CD8-positive, alpha-beta T cell (primary cell): ENCODE measurements at regions of chr1 and their contacts with region 1.

Region 1: GRCh38 chr1:42924082-42924850 is 34.4 kb downstream of the SLC2A1 start:
- DNase-seq: peak; percentile 78 to 94 (median 91)
- ATAC-seq: peak; percentile 90
- H3K4me3 ChIP-seq: peak overlapping the region; percentile 90 to 96
- H3K4me3 Mint-ChIP-seq: peak overlapping the region; percentile 95
- H3K27ac ChIP-seq: peak overlapping the region; percentile 83 to 91
- H3K27ac Mint-ChIP-seq: peak overlapping the region; percentile 98
- H3K4me1 ChIP-seq: peaks cover 15% of the 10 kb centered on the region
- H3K4me1 Mint-ChIP-seq: peaks cover 35% of the 10 kb centered on the region
- H3K27me3 ChIP-seq: no peaks in the 10 kb centered on the region
- H3K27me3 Mint-ChIP-seq: no peaks in the 10 kb centered on the region
- CTCF ChIP-seq: no peak

Region 2: DNA sequence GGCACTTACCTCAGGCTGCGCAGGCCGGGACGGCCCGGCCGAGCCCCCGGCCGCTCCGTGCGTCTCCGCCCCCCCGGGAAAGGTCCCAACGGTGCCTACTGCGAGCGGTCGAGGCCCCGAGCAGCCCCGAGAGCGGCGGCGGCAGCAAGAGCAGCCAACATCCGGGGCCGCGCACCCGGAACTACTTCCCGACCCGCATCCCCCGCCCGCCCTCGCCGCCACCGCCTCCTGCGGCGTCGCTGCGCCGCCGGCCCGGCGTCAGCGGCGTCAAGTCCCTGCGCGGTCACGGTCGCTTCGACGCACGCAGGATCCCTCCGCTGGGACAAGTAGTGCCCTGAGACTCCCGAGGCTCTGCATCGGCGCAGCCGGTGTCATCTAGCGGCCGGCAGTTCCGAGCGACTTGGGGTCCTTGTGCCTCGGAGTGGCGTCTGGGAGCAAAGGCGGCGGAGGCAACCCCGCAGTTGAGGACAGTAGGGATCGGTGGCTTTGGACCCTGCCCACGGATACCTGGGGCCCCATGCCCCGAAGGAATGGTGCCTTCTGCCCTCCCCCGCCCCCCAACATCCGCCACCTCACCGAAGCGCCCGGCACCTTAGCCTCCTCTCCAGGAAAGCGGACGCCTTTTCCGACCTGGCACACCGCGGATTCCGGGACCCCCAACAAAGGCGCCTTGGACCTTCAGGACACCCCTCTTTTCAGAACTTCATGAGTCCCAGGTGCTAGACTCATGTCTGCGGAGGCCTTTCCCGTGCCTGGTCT is 589.0 kb before region 1 on chr1 and contains the start of gene FOXJ3:
- CTCF ChIA-PET with region 1: no interaction called
- POLR2A ChIA-PET with region 1: no interaction called
- intact Hi-C with region 1: loop called (anchors 5 to 10 kb)
- DNase-seq: peak; percentile 82 to 99 (median 93)
- ATAC-seq: peak; percentile 92
- H3K4me3 ChIP-seq: peak within 1 kb of the TSS; percentile 82 to 85
- H3K4me3 Mint-ChIP-seq: peak within 1 kb of the TSS; percentile 98
- H3K27ac ChIP-seq: peak within 1 kb of the TSS; percentile 64 to 78
- H3K27ac Mint-ChIP-seq: peak within 1 kb of the TSS; percentile 91
- H3K4me1 ChIP-seq: peaks cover 32% of the 10 kb centered on the region
- H3K4me1 Mint-ChIP-seq: peaks cover 56% of the 10 kb centered on the region
- H3K27me3 ChIP-seq: no peaks in the 10 kb centered on the region
- H3K27me3 Mint-ChIP-seq: no peaks in the 10 kb centered on the region
- CTCF ChIP-seq: no peak
- total RNA-seq, gene FOXJ3: 80.6 to 89.3 TPM

Region 3: DNA sequence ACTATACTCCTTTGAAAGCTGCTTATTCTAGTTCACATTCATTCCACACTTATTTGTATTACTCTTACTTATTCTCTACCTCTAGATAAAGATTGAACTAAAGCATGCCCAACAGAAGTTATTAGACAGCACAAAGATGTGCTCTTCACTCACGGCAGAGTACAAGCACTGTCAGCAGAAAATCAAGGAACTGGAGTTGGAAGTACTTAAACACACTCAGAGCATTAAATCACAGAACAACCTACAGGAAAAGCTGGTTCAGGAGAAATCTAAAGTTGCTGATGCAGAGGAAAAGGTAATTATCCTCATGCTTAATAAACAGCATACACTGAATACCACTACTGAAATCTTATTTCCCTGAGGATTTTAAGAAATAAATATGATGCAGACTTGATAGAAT is 347.3 kb before region 1 on chr1:
- CTCF ChIA-PET with region 1: no interaction called
- POLR2A ChIA-PET with region 1: no interaction called
- intact Hi-C with region 1: loop called in 1 of 2 experiments (anchors 5 kb)
- DNase-seq: no peak
- ATAC-seq: no peak
- H3K4me3 ChIP-seq: no peak overlapping the region
- H3K4me3 Mint-ChIP-seq: no peak overlapping the region
- H3K27ac ChIP-seq: no peak overlapping the region
- H3K27ac Mint-ChIP-seq: no peak overlapping the region
- H3K4me1 ChIP-seq: no peaks in the 10 kb centered on the region
- H3K4me1 Mint-ChIP-seq: no peaks in the 10 kb centered on the region
- H3K27me3 ChIP-seq: no peaks in the 10 kb centered on the region
- H3K27me3 Mint-ChIP-seq: no peaks in the 10 kb centered on the region
- CTCF ChIP-seq: no peak

Region 4: DNA sequence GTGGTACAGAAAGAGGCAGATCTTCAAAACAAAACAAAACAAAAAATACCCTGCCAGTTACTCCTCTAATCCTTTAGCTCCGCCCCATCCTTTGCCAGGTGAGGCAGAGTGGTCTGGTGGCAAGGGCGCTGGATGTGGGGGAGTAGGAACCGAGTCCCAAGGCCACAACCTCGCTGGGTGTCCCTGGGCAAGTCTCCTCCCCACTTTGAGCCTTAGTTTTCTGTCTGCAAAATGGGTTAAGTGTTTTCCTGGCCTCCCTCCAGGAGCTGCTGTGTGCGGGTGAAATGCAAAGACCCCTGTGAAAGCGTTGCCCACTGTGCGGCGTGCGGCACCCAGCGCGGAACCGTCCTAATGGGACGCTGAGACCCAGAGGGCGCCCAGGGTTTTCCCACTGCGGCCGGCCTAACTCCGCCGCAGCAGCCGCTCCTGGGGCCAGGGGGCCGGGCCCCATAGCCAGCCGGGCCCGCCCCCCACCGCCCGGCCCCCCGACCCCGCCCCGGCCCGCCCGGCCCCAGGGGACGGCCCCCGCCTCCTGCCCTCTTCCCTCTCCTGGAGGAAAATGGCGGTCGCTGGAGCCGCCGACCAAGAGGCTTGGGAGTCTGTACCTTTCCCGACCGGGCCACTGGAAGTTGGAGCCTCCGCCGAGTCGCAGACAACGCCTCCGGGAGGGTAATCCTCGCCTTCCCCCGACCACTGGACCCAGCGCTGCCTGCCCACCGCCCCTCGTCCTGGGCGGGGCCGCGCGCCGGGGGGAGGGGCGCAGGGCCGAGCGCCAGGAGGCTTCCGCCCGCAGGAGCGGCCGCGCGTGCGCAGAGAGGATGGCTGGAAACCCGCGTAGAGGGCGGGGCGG is 107.5 kb before region 1 on chr1 and contains the starts of genes ERMAP and SVBP:
- CTCF ChIA-PET with region 1: no interaction called
- POLR2A ChIA-PET with region 1: no interaction called
- intact Hi-C with region 1: loop called in 1 of 2 experiments (anchors 1 kb)
- DNase-seq: peak; percentile 85 to 98 (median 95)
- ATAC-seq: peak; percentile 91
- H3K4me3 ChIP-seq: peak within 1 kb of the TSS; percentile 63 to 88
- H3K4me3 Mint-ChIP-seq: peak within 1 kb of the TSS; percentile 80
- H3K27ac ChIP-seq: peak within 1 kb of the TSS; percentile 69 to 89
- H3K27ac Mint-ChIP-seq: peak within 1 kb of the TSS; percentile 85
- H3K4me1 ChIP-seq: peaks cover 16% of the 10 kb centered on the region
- H3K4me1 Mint-ChIP-seq: peaks cover 27% of the 10 kb centered on the region
- H3K27me3 ChIP-seq: no peaks in the 10 kb centered on the region
- H3K27me3 Mint-ChIP-seq: no peaks in the 10 kb centered on the region
- CTCF ChIP-seq: no peak
- total RNA-seq, gene ERMAP: 3.0 to 3.3 TPM
- total RNA-seq, gene SVBP: 17.6 to 18.3 TPM

Region 5: GRCh38 chr1:42866549-42866948 is 57.7 kb before region 1 on chr1:
- CTCF ChIA-PET with region 1: no interaction called
- POLR2A ChIA-PET with region 1: no interaction called
- intact Hi-C with region 1: no loop called
- DNase-seq: no peak
- ATAC-seq: no peak
- H3K4me3 ChIP-seq: no peak overlapping the region
- H3K4me3 Mint-ChIP-seq: no peak overlapping the region
- H3K27ac ChIP-seq: no peak overlapping the region
- H3K27ac Mint-ChIP-seq: no peak overlapping the region
- H3K4me1 ChIP-seq: no peaks in the 10 kb centered on the region
- H3K4me1 Mint-ChIP-seq: no peaks in the 10 kb centered on the region
- H3K27me3 ChIP-seq: peaks cover 0 to 5% of the 10 kb centered on the region in 2 experiments
- H3K27me3 Mint-ChIP-seq: peaks cover 12% of the 10 kb centered on the region
- CTCF ChIP-seq: no peak

Region 6: DNA sequence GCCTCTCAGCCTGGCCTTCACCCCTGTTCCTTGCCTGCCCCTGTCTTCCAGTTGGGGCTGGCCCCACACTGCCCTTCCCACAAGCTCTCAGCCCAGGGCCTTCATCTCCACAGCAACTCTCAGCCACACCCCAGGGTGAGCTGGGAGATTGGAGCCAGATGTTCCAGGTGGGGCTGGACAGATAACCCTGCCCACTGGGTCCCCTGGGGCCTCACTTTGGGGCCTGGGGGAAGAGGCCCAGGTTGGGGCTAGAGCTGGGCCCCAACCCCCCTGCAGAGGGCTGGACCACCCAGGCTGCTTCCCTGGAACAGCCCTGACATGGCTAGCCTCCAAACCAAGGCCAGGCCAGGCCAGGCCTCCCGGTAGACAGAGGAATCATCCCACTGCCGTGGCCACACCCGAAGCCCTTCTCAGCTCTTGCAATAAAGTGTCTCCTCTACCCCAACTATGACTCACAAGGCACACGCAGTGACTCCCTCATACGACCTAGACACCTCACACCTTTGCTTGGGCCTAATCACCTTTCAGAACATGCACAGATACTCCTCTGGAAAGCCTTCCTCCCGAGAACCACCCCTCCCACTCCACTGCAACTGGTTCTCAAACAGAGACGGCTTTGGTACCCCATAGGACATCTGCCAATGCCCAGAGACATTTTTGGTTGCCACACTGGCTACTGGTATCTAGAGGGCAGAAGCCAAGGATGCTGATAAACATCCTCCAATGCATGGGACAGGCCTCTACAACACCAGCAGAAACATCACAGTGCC is 12.2 kb after region 1 on chr1:
- CTCF ChIA-PET with region 1: interaction called, 25 read pairs
- POLR2A ChIA-PET with region 1: interaction called, 10 read pairs
- intact Hi-C with region 1: loop called in 1 of 2 experiments (anchors 1 kb)
- DNase-seq: peak in 5 of 9 experiments; percentile 47 to 83 (median 67)
- ATAC-seq: peak; percentile 35
- H3K4me3 ChIP-seq: no peak overlapping the region
- H3K4me3 Mint-ChIP-seq: peak overlapping the region; percentile 42
- H3K27ac ChIP-seq: peak overlapping the region; percentile 19 to 90
- H3K27ac Mint-ChIP-seq: peak overlapping the region; percentile 95
- H3K4me1 ChIP-seq: peaks cover 79% of the 10 kb centered on the region
- H3K4me1 Mint-ChIP-seq: peaks cover 97% of the 10 kb centered on the region
- H3K27me3 ChIP-seq: no peaks in the 10 kb centered on the region
- H3K27me3 Mint-ChIP-seq: no peaks in the 10 kb centered on the region
- CTCF ChIP-seq: no peak

Region 7: GRCh38 chr1:43041593-43041992 is 117.3 kb after region 1 on chr1:
- CTCF ChIA-PET with region 1: interaction called, 3 read pairs
- POLR2A ChIA-PET with region 1: no interaction called
- intact Hi-C with region 1: loop called in 1 of 2 experiments (anchors 1 kb)
- DNase-seq: peak in 1 of 9 experiments; percentile 11
- ATAC-seq: no peak
- H3K4me3 ChIP-seq: no peak overlapping the region
- H3K4me3 Mint-ChIP-seq: no peak overlapping the region
- H3K27ac ChIP-seq: no peak overlapping the region
- H3K27ac Mint-ChIP-seq: no peak overlapping the region
- H3K4me1 ChIP-seq: peaks cover 3% of the 10 kb centered on the region
- H3K4me1 Mint-ChIP-seq: no peaks in the 10 kb centered on the region
- H3K27me3 ChIP-seq: no peaks in the 10 kb centered on the region
- H3K27me3 Mint-ChIP-seq: peaks cover 2% of the 10 kb centered on the region
- CTCF ChIP-seq: no peak